Pancreas (tissue), 10 donors: ENCODE measurements at regions of chr14 and their contacts with region 1.

Region 1: DNA sequence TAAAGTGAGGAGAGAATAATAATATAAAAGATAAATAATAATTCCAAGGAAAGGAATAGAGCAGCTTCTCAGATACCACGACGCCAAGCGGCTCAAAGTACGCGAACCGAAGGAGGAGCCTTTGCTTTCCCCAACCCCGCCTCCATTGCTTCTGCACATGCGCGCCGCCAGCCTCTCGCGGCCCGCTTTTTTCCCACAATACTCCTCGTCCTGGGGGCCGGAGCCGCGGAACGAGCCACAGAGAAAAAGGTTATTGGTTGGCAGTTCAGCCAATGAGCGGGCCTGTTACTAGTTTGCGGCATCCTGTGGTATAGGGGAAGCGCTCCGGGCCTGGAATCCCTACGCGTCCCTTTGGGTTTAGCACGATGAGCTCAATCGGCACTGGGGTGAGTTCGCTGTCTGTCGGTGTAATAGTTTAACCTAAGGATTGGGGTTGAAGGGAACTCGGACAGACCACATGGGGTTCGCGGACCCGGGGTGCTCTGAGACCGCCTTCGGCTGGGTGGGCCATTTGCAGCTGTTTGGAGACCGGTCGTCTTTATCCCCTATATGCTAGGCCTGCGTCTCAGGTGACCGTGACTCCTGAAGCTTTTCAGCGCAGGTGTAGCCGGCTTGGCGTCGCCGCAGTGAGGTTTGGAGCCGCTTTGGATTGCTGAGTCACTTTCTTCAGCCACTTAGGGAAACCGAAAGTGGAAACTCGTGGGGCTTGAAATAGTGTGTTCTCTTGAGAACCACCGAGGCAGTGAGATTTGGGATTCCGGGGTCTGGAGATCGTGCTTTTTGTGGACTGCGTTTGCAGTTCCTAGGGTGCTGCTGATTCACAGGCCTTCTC is at the start of gene PSMA3:
- DNase-seq: peak; percentile 96 to 99 (median 98)
- ATAC-seq: peak; percentile 90 to 95 (median 92)
- H3K4me3 ChIP-seq: peak within 1 kb of the TSS; percentile 61 to 90 (median 82)
- H3K27ac ChIP-seq: peak within 1 kb of the TSS; percentile 82 to 96 (median 87)
- H3K4me1 ChIP-seq: peaks cover 14 to 33% (median 33%) of the 10 kb centered on the region in 3 donors
- H3K27me3 ChIP-seq: no peaks in the 10 kb centered on the region
- CTCF ChIP-seq: no peak
- total RNA-seq, gene PSMA3: 40.0 to 67.8 (median 58.4) TPM

Region 2: DNA sequence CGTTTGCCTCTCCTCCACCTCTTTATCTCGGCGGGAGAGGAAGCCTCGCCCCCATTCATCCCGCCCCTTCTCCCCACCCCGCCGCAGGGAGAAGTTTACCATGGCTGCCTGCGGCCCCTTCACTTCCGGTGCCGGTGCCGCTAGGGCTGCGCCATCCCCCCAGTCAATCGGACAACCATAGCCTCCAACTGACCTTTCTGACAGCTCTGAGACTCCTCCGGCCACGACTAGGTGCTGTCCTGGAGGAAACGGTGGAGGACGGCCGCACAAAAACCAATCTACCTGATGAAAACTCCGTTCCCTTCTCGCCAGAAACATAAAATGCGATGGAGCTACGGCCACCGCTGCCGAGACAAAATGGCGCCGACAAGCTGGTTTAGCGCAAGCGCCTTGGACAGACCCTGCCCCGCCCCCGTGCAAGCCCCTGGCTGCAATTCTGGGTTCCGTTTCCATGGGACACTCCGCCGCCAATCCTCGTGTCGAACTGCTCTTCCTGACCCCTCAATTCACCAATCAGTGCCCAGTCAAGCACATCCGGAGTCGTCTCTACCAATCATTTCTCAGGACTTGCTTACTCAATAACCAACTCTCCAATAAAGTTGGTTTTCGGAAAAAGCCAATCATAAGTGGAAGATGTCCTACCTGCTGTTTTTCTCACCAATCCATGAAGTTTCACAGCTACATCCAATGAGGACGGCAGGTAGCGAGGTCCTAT is 53.1 kb after region 1 on chr14:
- intact Hi-C with region 1: loop called in 1 of 3 experiments (anchors 10 kb)
- DNase-seq: peak; percentile 93 to 99 (median 98)
- ATAC-seq: peak; percentile 89 to 96 (median 90)
- H3K4me3 ChIP-seq: peak overlapping the region; percentile 87 to 99 (median 92)
- H3K27ac ChIP-seq: peak overlapping the region; percentile 89 to 96 (median 94)
- H3K4me1 ChIP-seq: peaks cover 10 to 25% (median 16%) of the 10 kb centered on the region in 3 donors
- H3K27me3 ChIP-seq: no peaks in the 10 kb centered on the region
- CTCF ChIP-seq: no peak

Region 3: GRCh38 chr14:58876608-58877007 is 631.8 kb after region 1 on chr14:
- intact Hi-C with region 1: no loop called
- DNase-seq: no peak
- ATAC-seq: peak in 1 of 4 donors; percentile 35
- H3K4me3 ChIP-seq: no peak overlapping the region
- H3K27ac ChIP-seq: no peak overlapping the region
- H3K4me1 ChIP-seq: no peaks in the 10 kb centered on the region
- H3K27me3 ChIP-seq: no peaks in the 10 kb centered on the region
- CTCF ChIP-seq: no peak